Dorsolateral prefrontal cortex (tissue), 120 donors: ENCODE measurements at regions of chr15 and their contacts with region 1.

Region 1: DNA sequence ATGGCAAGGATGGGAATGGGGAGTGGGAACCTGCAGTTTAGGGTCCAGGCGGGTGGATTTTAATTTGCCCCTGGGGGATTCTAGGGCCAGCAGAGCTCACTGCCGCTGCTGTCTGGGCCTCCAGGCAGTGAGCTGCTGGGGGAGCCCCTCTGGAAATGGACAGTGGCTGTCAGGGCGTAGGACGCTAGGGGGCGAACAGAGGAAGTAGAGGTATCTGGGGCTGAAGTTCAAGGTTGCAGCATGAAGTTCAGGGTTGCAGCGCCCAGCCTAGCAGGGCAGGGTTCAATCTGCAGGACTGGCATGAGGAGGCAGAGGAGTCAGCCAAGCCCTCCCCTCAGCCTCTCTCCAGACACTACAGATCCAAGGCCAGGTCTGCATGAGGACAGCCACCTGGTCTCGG is 49.6 kb downstream of the APBA2 start:
- DNase-seq: peak in 2 of 10 donors; percentile 32 to 39
- H3K4me3 ChIP-seq: peak overlapping the region in 9 of 59 donors; percentile 2 to 43 (median 35)
- H3K27ac ChIP-seq: peak overlapping the region in 49 of 59 donors; percentile 2 to 86 (median 65)
- H3K27me3 ChIP-seq: no peaks in the 10 kb centered on the region
- CTCF ChIP-seq: peak in 38 of 56 donors; percentile 12 to 51 (median 28)

Region 2: GRCh38 chr15:28885630-28886430 is 49.5 kb before region 1 on chr15 and contains the start of gene APBA2:
- intact Hi-C with region 1: loop called in 1 of 2 experiments (anchors 5 kb)
- DNase-seq: peak in 4 of 10 donors; percentile 46 to 65 (median 47)
- H3K4me3 ChIP-seq: peak within 1 kb of the TSS; percentile 52 to 85 (median 71)
- H3K27ac ChIP-seq: peak within 1 kb of the TSS in 55 of 59 donors; percentile 5 to 87 (median 70)
- H3K27me3 ChIP-seq: peaks cover 0 to 3% (median 0%) of the 10 kb centered on the region in 45 donors
- CTCF ChIP-seq: peak in 1 of 56 donors; percentile 7
- total RNA-seq, gene APBA2: 90.7 to 210 (median 166) TPM

Region 3: DNA sequence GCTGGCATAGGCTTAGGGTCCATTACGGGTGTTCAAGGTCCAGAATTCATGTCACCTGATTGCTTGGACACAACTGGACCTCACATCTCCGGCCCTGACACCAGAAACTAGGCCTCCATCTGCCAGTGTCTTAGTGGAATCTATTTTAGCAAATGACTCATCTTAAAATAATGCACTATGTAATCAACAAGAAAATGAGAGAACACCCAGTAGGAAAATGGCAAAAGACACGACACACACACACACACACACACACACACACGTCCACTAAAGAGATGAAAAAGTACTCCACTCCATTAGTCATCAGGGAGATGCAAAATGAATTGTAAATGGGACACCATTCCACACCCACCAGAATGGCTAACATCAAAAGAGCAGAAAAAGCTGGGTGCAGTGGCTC is 38.4 kb before region 1 on chr15:
- intact Hi-C with region 1: loop called in 1 of 2 experiments (anchors 5 kb)
- DNase-seq: no peak
- H3K4me3 ChIP-seq: no peak overlapping the region
- H3K27ac ChIP-seq: peak overlapping the region in 35 of 59 donors; percentile 0 to 88 (median 62)
- H3K27me3 ChIP-seq: no peaks in the 10 kb centered on the region
- CTCF ChIP-seq: no peak

Region 4: GRCh38 chr15:28969511-28970085 is 34.3 kb after region 1 on chr15:
- intact Hi-C with region 1: loop called in 1 of 2 experiments (anchors 5 kb)
- DNase-seq: peak; percentile 47 to 89 (median 82)
- H3K4me3 ChIP-seq: peak overlapping the region in 17 of 59 donors; percentile 0 to 37 (median 15)
- H3K27ac ChIP-seq: peak overlapping the region in 40 of 59 donors; percentile 1 to 78 (median 53)
- H3K27me3 ChIP-seq: no peaks in the 10 kb centered on the region
- CTCF ChIP-seq: peak in 3 of 56 donors; percentile 12 to 13 (median 12)

Region 5: GRCh38 chr15:28975766-28976179 is 40.4 kb after region 1 on chr15:
- intact Hi-C with region 1: loop called (anchors 5 kb)
- DNase-seq: no peak
- H3K4me3 ChIP-seq: no peak overlapping the region
- H3K27ac ChIP-seq: peak overlapping the region in 43 of 59 donors; percentile 1 to 98 (median 92)
- H3K27me3 ChIP-seq: no peaks in the 10 kb centered on the region
- CTCF ChIP-seq: peak; percentile 40 to 88 (median 76)

Region 6: DNA sequence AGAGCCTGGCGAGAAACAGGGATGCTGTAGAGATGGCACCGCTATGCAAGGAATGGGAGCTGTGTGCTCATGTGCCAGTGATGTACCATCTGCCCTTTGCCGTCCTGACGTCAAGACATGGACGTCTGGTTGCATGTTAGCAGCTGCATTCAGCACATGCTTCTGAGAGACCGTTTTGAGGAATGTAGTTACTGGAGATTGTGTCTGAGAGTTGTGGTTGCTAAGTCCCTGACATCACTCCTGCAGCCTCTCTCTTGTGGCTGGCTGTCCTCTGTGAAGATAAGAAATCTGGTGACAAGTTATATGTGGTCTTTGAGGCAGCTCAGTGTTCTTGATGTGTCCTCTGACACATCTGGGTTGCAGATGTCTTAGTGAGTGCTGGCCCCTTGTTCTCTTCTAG is 115.5 kb after region 1 on chr15:
- intact Hi-C with region 1: no loop called
- DNase-seq: peak in 1 of 10 donors; percentile 29
- H3K4me3 ChIP-seq: no peak overlapping the region
- H3K27ac ChIP-seq: peak overlapping the region in 39 of 59 donors; percentile 0 to 64 (median 38)
- H3K27me3 ChIP-seq: no peaks in the 10 kb centered on the region
- CTCF ChIP-seq: no peak